ENCODE measurements at regions of chr16 and their contacts with region 1.

Region 1: DNA sequence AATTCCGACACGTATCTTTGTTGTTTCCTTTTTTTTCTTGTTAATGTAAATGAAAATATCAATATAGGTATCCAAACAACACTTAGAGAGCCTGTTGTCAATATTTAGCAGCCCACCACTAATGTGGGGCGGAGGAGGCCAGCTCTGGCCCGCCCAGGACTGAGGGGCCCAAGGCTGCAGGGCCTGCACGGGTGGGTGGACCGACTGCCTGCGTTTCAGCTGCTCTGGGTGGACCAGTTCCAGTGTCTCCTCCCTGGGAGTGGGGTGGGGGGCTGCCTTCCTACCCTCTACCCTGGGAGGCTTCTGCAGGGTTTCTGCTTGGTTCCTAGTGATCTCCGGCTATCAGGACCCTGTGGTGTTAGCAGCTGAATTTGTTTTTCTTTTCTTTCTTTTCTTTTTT is 15.9 kb upstream of the ADGRG1 start:
- DNase-seq: no peak
- H3K4me3 ChIP-seq: no peak overlapping the region
- H3K27ac ChIP-seq: no peak overlapping the region
- H3K4me1 ChIP-seq: peaks cover 3% of the 10 kb centered on the region
- H3K27me3 ChIP-seq: no peaks in the 10 kb centered on the region
- CTCF ChIP-seq: no peak

Region 2: DNA sequence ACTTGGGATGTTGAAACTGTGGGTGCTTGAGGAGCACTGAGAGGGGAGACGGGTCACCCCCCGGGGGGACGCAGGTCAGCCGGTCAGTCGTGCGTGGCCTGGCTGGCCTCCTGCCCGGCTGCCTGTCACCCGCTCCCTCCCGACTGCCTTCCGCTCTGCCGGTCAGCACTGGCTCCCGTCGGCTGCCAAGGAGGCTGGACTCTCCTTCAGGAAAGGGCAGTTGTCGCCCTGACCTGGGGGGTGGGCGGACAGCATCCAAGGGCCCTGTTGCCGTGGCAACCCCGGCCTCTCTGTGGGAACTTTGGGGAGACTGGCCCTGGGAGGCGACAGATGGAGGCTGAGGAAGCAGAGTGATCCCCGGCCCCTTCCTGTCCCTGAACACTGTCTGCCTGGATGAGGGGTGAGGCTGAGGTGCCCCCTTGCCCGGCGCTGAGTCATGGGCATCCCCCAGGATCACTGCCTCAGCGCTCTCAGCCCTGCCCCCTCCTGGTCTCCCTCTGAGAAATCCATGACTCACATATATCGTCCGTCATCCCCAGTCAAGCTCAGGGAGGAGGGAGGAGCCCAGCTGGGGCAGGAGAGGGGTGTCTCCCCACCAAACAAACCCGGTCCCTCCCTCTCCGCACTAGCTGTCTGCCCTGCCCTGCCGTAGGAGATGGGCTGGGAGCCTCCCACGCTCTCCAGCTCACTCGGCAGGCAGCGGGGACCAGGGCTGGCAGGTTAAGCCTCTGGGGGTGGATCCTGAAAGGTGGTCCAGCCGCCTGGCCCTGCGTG is 15.7 kb after region 1 on chr16 and contains the start of gene ADGRG1:
- CTCF ChIA-PET with region 1: no interaction called
- POLR2A ChIA-PET with region 1: no interaction called
- intact Hi-C with region 1: no loop called
- DNase-seq: peak; percentile 92
- H3K4me3 ChIP-seq: peak within 1 kb of the TSS; percentile 11
- H3K27ac ChIP-seq: no peak within 1 kb of the TSS
- H3K4me1 ChIP-seq: peaks cover 8% of the 10 kb centered on the region
- H3K27me3 ChIP-seq: no peaks in the 10 kb centered on the region
- CTCF ChIP-seq: 0 out of 2 replicates have a peak, but pooled peaks have one; percentile 20
- total RNA-seq, gene ADGRG1: 0.75 and 1.0 TPM in 2 replicates

Region 3: GRCh38 chr16:58129097-58129936 is 516.8 kb after region 1 on chr16 and contains the start of gene CFAP20:
- CTCF ChIA-PET with region 1: no interaction called
- POLR2A ChIA-PET with region 1: interaction called, 27 read pairs
- intact Hi-C with region 1: no loop called
- DNase-seq: peak; percentile 100
- H3K4me3 ChIP-seq: peak within 1 kb of the TSS; percentile 95
- H3K27ac ChIP-seq: peak within 1 kb of the TSS; percentile 92
- H3K4me1 ChIP-seq: peaks cover 27% of the 10 kb centered on the region
- H3K27me3 ChIP-seq: no peaks in the 10 kb centered on the region
- CTCF ChIP-seq: no peak
- total RNA-seq, gene CFAP20: 66.3 and 81.6 TPM in 2 replicates

Measured in A673 (cell line).